Natural killer cell (primary cell): ENCODE measurements at regions of chr9 and their contacts with region 1.

Region 1: GRCh38 chr9:94681508-94681907 is 42.2 kb upstream of the FBP1 start:
- DNase-seq: peak; percentile 20 to 81
- ATAC-seq: peak; percentile 83 to 94 (median 85)
- H3K4me3 ChIP-seq: no peak overlapping the region
- H3K4me3 Mint-ChIP-seq: no peak overlapping the region
- H3K27ac ChIP-seq: no peak overlapping the region
- H3K27ac Mint-ChIP-seq: no peak overlapping the region
- H3K4me1 ChIP-seq: peaks cover 2% of the 10 kb centered on the region
- H3K4me1 Mint-ChIP-seq: peaks cover 0 to 4% of the 10 kb centered on the region in 2 donors
- H3K27me3 ChIP-seq: no peaks in the 10 kb centered on the region
- H3K27me3 Mint-ChIP-seq: peaks cover 16 to 35% of the 10 kb centered on the region in 2 donors
- CTCF ChIP-seq: peak; percentile 70

Region 2: DNA sequence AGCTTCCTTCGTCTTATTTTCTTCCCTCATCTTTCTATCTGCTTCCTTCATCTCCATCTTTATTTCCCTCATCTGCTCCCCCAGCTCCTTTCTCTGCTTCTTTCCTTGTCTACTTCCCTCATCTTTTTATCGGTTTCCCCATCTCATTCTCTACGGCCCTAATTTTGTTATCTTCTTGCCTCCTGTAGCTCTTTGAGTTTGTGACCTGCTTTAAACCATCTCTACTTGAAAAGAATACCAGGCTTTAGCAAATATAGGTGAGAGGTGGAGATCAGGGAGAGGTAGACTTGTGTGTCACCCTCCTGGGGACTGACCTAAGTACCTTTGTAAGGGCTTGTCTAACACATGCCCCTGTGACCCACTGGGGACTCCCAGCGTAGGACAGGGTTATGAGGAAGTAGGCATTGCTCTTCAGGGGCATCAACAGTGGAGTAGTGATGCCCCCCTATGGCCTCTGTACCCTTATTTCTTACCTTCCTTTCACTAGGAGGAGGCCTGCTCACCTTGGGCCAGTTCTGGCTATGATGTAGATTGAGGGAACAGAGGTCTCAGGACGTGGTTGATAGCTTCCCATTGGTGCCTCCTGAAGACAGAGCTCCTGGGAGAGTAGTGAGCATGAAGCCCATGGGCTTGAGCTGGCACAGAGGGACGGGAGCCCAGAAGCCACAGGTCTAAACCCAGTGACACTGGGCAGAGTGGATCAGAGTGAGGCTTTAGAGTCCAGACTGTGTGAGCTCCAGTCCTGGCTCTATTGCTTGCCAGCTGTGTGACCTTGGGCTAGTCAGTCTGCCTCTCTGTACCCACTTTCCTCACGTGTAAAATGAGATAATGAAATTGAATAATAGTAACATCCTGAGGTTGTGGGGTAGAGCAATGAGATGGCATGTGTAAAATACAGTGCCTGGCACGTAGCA is 236.6 kb after region 1 on chr9:
- intact Hi-C with region 1: loop called (anchors 1 kb)
- DNase-seq: peak in 1 of 2 donors; percentile 60
- ATAC-seq: peak; percentile 67 to 96 (median 94)
- H3K4me3 ChIP-seq: no peak overlapping the region
- H3K4me3 Mint-ChIP-seq: no peak overlapping the region
- H3K27ac ChIP-seq: no peak overlapping the region
- H3K27ac Mint-ChIP-seq: peak overlapping the region in 1 of 2 donors; percentile 17
- H3K4me1 ChIP-seq: no peaks in the 10 kb centered on the region
- H3K4me1 Mint-ChIP-seq: peaks cover 0 to 14% of the 10 kb centered on the region in 2 donors
- H3K27me3 ChIP-seq: no peaks in the 10 kb centered on the region
- H3K27me3 Mint-ChIP-seq: no peaks in the 10 kb centered on the region
- CTCF ChIP-seq: no peak

Region 3: GRCh38 chr9:95127249-95128176 is 446.0 kb after region 1 on chr9:
- intact Hi-C with region 1: loop called (anchors 1 kb)
- DNase-seq: peak; percentile 67 to 79
- ATAC-seq: peak; percentile 89 to 98 (median 98)
- H3K4me3 ChIP-seq: no peak overlapping the region
- H3K4me3 Mint-ChIP-seq: no peak overlapping the region
- H3K27ac ChIP-seq: no peak overlapping the region
- H3K27ac Mint-ChIP-seq: no peak overlapping the region
- H3K4me1 ChIP-seq: peaks cover 6% of the 10 kb centered on the region
- H3K4me1 Mint-ChIP-seq: peaks cover 5% of the 10 kb centered on the region in 2 donors
- H3K27me3 ChIP-seq: no peaks in the 10 kb centered on the region
- H3K27me3 Mint-ChIP-seq: no peaks in the 10 kb centered on the region
- CTCF ChIP-seq: peak; percentile 98

Region 4: DNA sequence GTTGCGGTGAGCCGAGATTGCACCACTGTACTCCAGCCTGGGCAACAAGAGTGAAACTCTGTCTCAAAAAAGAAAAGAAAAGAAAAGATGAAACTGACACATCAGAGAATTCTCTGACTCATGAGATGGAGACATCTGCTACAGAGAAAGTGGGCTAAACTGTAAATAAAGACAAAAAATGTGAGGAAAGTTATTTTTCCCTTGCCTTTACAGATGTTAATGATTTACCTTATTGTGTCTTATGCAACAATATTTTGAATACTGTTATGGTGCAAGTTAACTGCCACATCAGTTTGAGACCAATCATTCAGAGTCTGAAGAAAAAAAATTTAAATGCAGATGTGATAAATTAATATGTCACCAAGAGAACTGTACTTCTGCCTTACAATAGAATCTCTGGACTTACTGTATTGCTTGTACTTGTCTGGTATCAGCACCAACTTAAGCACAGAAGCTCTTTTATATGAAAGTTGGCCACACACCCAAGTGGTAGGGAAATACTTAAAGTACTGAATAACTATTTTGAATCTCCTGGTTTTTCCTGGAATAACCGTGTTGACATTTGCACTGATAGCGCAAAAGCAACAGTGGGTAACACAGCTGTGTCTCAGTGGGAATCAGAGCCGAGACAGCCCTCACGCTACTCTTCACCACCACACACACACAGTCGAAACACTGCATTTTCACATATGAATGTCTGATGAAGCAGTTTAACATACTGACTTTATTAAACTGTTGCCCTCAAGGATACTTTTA is 466.1 kb after region 1 on chr9:
- intact Hi-C with region 1: no loop called
- DNase-seq: no peak
- ATAC-seq: no peak
- H3K4me3 ChIP-seq: no peak overlapping the region
- H3K4me3 Mint-ChIP-seq: no peak overlapping the region
- H3K27ac ChIP-seq: no peak overlapping the region
- H3K27ac Mint-ChIP-seq: no peak overlapping the region
- H3K4me1 ChIP-seq: no peaks in the 10 kb centered on the region
- H3K4me1 Mint-ChIP-seq: no peaks in the 10 kb centered on the region
- H3K27me3 ChIP-seq: no peaks in the 10 kb centered on the region
- H3K27me3 Mint-ChIP-seq: no peaks in the 10 kb centered on the region
- CTCF ChIP-seq: no peak

Region 5: GRCh38 chr9:96217754-96218693 is 1536.5 kb after region 1 on chr9:
- intact Hi-C with region 1: loop called (anchors 1 kb)
- DNase-seq: peak; percentile 82 to 85
- ATAC-seq: peak; percentile 91 to 92 (median 92)
- H3K4me3 ChIP-seq: no peak overlapping the region
- H3K4me3 Mint-ChIP-seq: peak overlapping the region; percentile 55
- H3K27ac ChIP-seq: no peak overlapping the region
- H3K27ac Mint-ChIP-seq: peak overlapping the region in 1 of 2 donors; percentile 29
- H3K4me1 ChIP-seq: peaks cover 25% of the 10 kb centered on the region
- H3K4me1 Mint-ChIP-seq: peaks cover 4 to 21% of the 10 kb centered on the region in 2 donors
- H3K27me3 ChIP-seq: peaks cover 20% of the 10 kb centered on the region
- H3K27me3 Mint-ChIP-seq: peaks cover 39 to 63% of the 10 kb centered on the region in 2 donors
- CTCF ChIP-seq: peak; percentile 99